ENCODE measurements at regions of chr12 and their contacts with region 1.

Region 1: GRCh38 chr12:100208834-100209233 is 8.2 kb downstream of the ACTR6 start:
- DNase-seq: no peak
- H3K4me3 ChIP-seq: no peak overlapping the region
- H3K27ac ChIP-seq: no peak overlapping the region
- H3K4me1 ChIP-seq: no peaks in the 10 kb centered on the region
- H3K27me3 ChIP-seq: no peaks in the 10 kb centered on the region
- CTCF ChIP-seq: no peak
- EP300 ChIP-seq: no peak
- POLR2A ChIP-seq: no peak

Region 2: DNA sequence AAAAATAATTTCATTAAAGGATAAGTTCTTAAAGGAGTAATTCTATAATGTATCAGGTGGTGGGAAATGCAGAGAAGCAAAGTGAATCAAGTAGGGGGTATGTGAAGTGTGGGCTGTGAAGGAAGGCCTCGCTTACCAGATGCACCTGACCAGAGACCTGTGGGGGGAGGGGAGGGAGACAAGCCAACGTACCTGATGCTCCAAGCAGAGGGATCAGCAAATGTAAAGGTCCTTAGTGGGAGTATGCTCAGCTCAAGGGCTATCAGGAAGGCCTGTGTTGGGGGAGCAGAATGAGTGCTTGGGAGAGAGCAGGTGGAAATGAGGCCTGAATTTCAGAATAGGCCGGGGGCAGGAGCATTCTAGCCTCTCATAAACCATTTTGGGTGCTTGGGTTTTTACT is 642.8 kb after region 1 on chr12:
- in situ Hi-C with region 1: no loop called
- intact Hi-C with region 1: loop called (anchors 5 kb)
- DNase-seq: no peak
- H3K4me3 ChIP-seq: no peak overlapping the region
- H3K27ac ChIP-seq: no peak overlapping the region
- H3K4me1 ChIP-seq: no peaks in the 10 kb centered on the region
- H3K27me3 ChIP-seq: no peaks in the 10 kb centered on the region
- CTCF ChIP-seq: no peak
- EP300 ChIP-seq: no peak
- POLR2A ChIP-seq: no peak

Measured in transverse colon (tissue), 4 donors.